ENCODE measurements at regions of chr19 and their contacts with region 1.

Region 1: GRCh38 chr19:44113138-44113783 is at the start of gene ZNF225:
- DNase-seq: peak; percentile 95
- H3K4me3 Mint-ChIP-seq: peak within 1 kb of the TSS; percentile 99
- H3K27ac Mint-ChIP-seq: peak within 1 kb of the TSS; percentile 91
- H3K4me1 Mint-ChIP-seq: peaks cover 17% of the 10 kb centered on the region
- H3K27me3 Mint-ChIP-seq: no peaks in the 10 kb centered on the region
- total RNA-seq, gene ZNF225: 2.7 and 3.2 TPM in 2 replicates

Region 2: GRCh38 chr19:43983912-43984686 is 129.2 kb before region 1 on chr19 and contains the start of gene ZNF155:
- intact Hi-C with region 1: loop called (anchors 1 kb)
- DNase-seq: peak; percentile 91
- H3K4me3 Mint-ChIP-seq: peak within 1 kb of the TSS; percentile 97
- H3K27ac Mint-ChIP-seq: peak within 1 kb of the TSS; percentile 93
- H3K4me1 Mint-ChIP-seq: peaks cover 8% of the 10 kb centered on the region
- H3K27me3 Mint-ChIP-seq: no peaks in the 10 kb centered on the region
- total RNA-seq, gene ZNF155: 4.6 and 6.6 TPM in 2 replicates

Region 3: GRCh38 chr19:44071824-44072542 is 41.3 kb before region 1 on chr19 and contains the start of gene ZNF284:
- intact Hi-C with region 1: loop called (anchors 1 kb)
- DNase-seq: peak; percentile 94
- H3K4me3 Mint-ChIP-seq: peak within 1 kb of the TSS; percentile 91
- H3K27ac Mint-ChIP-seq: peak within 1 kb of the TSS; percentile 73
- H3K4me1 Mint-ChIP-seq: peaks cover 13% of the 10 kb centered on the region
- H3K27me3 Mint-ChIP-seq: no peaks in the 10 kb centered on the region
- total RNA-seq, gene ZNF284: 1.2 TPM in 2 replicates

Region 4: GRCh38 chr19:44141191-44142058 is 28.2 kb after region 1 on chr19 and contains the start of gene ZNF234:
- intact Hi-C with region 1: loop called (anchors 1 kb)
- DNase-seq: peak; percentile 90
- H3K4me3 Mint-ChIP-seq: peak within 1 kb of the TSS; percentile 92
- H3K27ac Mint-ChIP-seq: peak within 1 kb of the TSS; percentile 94
- H3K4me1 Mint-ChIP-seq: peaks cover 15% of the 10 kb centered on the region
- H3K27me3 Mint-ChIP-seq: no peaks in the 10 kb centered on the region
- total RNA-seq, gene ZNF234: 10.9 and 12.9 TPM in 2 replicates

Region 5: DNA sequence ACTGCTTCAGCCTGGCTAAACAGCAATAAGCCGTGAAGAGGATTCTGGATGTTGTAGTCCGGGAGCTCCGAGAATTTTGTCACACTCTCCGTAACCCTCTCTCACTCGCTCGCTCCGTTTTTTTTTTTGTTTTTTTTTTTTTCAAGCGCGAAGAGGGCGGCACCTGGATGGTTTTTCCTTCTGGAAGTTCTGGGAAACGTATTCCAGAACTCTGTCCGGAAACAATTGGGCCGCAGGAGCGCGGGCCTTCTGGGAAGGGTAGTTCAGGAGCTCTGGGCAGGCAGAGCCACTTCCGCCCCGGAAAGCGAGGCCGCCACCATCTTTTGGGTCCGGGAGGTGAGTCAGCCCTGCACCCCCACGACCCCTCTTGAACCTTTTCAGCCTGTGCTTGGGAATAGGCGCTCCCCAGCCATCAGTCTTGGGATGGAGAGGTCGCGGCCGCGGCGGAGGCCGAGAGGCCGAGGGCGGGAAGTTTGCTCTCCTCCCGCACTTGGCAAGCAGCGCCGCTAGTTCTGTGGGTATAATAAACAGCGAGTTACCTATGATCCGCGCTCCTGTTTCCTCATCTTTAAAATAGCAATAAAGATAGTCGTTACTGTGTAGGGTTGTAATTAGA is 99.1 kb after region 1 on chr19 and contains the start of gene ZNF227:
- intact Hi-C with region 1: loop called (anchors 2 kb)
- DNase-seq: peak; percentile 93
- H3K4me3 Mint-ChIP-seq: peak within 1 kb of the TSS; percentile 94
- H3K27ac Mint-ChIP-seq: peak within 1 kb of the TSS; percentile 91
- H3K4me1 Mint-ChIP-seq: peaks cover 12% of the 10 kb centered on the region
- H3K27me3 Mint-ChIP-seq: no peaks in the 10 kb centered on the region
- total RNA-seq, gene ZNF227: 17.8 and 18.8 TPM in 2 replicates

Region 6: DNA sequence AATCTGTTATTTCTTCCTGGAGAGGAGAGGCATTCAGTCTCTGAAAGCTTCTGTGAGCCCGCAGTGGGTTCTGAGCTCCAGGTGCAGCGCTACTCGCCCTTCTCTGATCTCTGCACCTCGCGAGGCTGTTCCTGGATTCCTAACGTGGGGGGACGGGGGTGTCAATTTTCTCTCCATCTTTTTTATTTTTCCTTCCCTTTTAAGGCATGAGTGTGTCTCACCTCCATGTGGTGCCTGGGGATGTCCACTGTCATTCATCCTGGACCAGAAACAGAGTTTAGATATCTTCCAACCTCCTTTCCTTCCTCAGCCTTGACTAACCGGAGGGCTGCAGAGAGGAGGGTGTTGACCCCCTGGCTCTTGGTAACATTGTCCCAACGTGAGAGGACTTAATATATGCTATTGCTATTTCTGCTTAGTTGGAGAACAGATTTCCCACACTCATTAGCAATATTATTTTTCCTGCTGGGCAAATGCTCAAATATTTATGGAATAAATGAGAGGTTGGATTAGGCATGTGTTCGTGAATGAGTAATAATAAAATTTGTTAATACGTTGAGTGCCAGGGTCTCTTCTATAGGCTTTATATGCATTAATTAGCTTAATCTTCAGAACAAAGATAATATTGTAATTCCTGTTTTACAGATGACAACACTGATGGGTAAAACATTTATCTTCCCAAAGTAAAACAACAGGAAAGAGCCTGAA is 147.3 kb after region 1 on chr19:
- intact Hi-C with region 1: no loop called
- DNase-seq: no peak
- H3K4me3 Mint-ChIP-seq: peak overlapping the region; percentile 71
- H3K27ac Mint-ChIP-seq: no peak overlapping the region
- H3K4me1 Mint-ChIP-seq: peaks cover 3% of the 10 kb centered on the region
- H3K27me3 Mint-ChIP-seq: no peaks in the 10 kb centered on the region

Region 7: GRCh38 chr19:44500148-44500956 is 387.1 kb after region 1 on chr19 and contains the start of gene ZNF180:
- intact Hi-C with region 1: loop called (anchors 5 kb)
- DNase-seq: peak; percentile 99
- H3K4me3 Mint-ChIP-seq: peak within 1 kb of the TSS; percentile 94
- H3K27ac Mint-ChIP-seq: peak within 1 kb of the TSS; percentile 93
- H3K4me1 Mint-ChIP-seq: peaks cover 27% of the 10 kb centered on the region
- H3K27me3 Mint-ChIP-seq: no peaks in the 10 kb centered on the region
- total RNA-seq, gene ZNF180: 7.0 and 8.5 TPM in 2 replicates